Mammary epithelial cell (primary cell): ENCODE measurements at regions of chr3 and their contacts with region 1.

Region 1: DNA sequence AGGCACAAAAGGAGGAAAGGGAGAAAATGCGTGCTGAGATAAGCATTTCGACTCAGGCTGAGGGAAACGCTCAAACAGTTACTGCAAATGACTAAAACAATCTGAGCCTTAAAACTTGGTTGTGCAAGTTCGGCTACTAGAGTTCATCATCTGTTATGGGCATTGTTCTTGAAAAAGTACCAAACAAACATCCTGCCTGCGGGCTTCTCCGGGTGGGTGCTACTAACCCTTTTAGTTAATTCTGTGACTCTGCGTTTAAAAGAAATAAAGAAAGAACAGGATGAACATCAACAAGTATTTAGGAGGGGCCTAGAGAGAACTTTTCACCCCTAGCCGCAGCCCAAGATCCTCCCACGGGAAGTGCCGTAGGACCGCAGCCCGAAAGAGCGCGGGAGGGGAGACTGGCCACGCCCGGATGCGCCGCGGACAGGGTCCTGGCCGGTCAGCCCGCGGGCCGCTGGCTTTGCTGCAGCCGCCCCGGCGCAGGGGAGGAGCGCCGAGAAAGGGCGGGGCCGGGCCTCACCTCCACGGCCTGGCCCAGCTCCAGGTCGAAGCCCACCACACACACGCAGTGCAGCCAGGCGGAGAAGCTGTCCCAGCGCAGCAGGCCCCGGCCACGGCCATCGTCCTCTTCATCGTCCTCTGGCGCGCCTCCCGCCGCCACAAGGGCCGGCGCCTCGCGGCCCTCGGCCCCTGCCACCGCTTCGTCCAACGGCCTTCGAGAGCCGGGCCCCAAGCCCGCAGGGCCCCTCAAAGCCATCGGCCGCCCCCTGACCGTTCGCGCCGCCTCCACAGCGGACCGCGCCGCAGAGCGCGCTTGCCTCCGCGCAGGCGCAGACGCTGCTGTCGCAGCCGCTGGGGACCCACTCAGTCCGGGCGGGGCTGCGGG is at the start of gene DENND6A:
- DNase-seq: peak; percentile 92
- H3K4me3 ChIP-seq: peak within 1 kb of the TSS; percentile 64 to 88 (median 75)
- H3K27ac ChIP-seq: peak within 1 kb of the TSS; percentile 82
- H3K4me1 ChIP-seq: peaks cover 52% of the 10 kb centered on the region
- H3K27me3 ChIP-seq: no peaks in the 10 kb centered on the region
- CTCF ChIP-seq: no peak
- total RNA-seq, gene DENND6A: 26.3 to 29.2 TPM

Region 2: GRCh38 chr3:57597122-57597923 is 95.2 kb before region 1 on chr3 and contains the start of gene ARF4:
- CTCF ChIA-PET with region 1: no interaction called
- dilution Hi-C with region 1: no loop called
- in situ Hi-C with region 1: no loop called
- intact Hi-C with region 1: loop called (anchors 2 kb)
- DNase-seq: peak; percentile 100
- H3K4me3 ChIP-seq: peak within 1 kb of the TSS; percentile 85 to 98 (median 97)
- H3K27ac ChIP-seq: peak within 1 kb of the TSS; percentile 99
- H3K4me1 ChIP-seq: peaks cover 29% of the 10 kb centered on the region
- H3K27me3 ChIP-seq: no peaks in the 10 kb centered on the region
- CTCF ChIP-seq: peak in 1 of 2 donors; percentile 24
- total RNA-seq, gene ARF4: 202 to 208 TPM

Region 3: GRCh38 chr3:57706462-57706861 is 14.0 kb after region 1 on chr3:
- CTCF ChIA-PET with region 1: interaction called, 3 read pairs
- dilution Hi-C with region 1: no loop called
- in situ Hi-C with region 1: no loop called
- intact Hi-C with region 1: loop called (anchors 2 kb)
- DNase-seq: peak; percentile 94
- H3K4me3 ChIP-seq: no peak overlapping the region
- H3K27ac ChIP-seq: peak overlapping the region; percentile 19
- H3K4me1 ChIP-seq: peaks cover 18% of the 10 kb centered on the region
- H3K27me3 ChIP-seq: no peaks in the 10 kb centered on the region
- CTCF ChIP-seq: no peak

Region 4: GRCh38 chr3:57729334-57730045 is 37.0 kb after region 1 on chr3:
- CTCF ChIA-PET with region 1: no interaction called
- dilution Hi-C with region 1: loop called (anchors 5 kb)
- in situ Hi-C with region 1: no loop called
- intact Hi-C with region 1: no loop called
- DNase-seq: peak; percentile 62
- H3K4me3 ChIP-seq: no peak overlapping the region
- H3K27ac ChIP-seq: no peak overlapping the region
- H3K4me1 ChIP-seq: no peaks in the 10 kb centered on the region
- H3K27me3 ChIP-seq: no peaks in the 10 kb centered on the region
- CTCF ChIP-seq: no peak

Region 5: DNA sequence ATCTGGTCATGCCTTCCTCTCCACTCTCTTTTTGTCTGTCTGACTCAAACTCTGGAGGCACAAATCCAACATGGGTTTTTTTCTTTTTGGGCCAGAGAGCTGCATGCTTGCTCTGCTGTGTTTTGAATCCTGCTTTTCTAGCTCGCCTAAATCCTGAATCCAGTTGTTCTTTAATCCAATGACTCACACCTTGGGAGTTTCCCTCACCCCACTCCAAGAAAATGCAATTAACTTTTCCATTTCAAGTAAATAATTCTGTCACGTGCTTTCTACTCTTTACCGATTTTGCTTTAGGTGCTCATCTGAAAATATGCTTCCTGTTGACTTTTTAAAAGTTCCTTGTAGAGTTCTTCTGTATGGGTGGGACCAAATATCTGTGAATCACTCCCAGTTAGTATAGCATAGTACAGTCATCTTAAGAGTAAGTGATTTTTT is 111.2 kb after region 1 on chr3:
- CTCF ChIA-PET with region 1: no interaction called
- dilution Hi-C with region 1: no loop called
- in situ Hi-C with region 1: no loop called
- intact Hi-C with region 1: loop called (anchors 2 kb)
- DNase-seq: peak; percentile 97
- H3K4me3 ChIP-seq: peak overlapping the region in 2 of 3 experiments; percentile 3 to 12
- H3K27ac ChIP-seq: peak overlapping the region; percentile 94
- H3K4me1 ChIP-seq: peaks cover 40% of the 10 kb centered on the region
- H3K27me3 ChIP-seq: no peaks in the 10 kb centered on the region
- CTCF ChIP-seq: no peak

Region 6: GRCh38 chr3:57826245-57826951 is 133.9 kb after region 1 on chr3:
- CTCF ChIA-PET with region 1: no interaction called
- dilution Hi-C with region 1: no loop called
- in situ Hi-C with region 1: no loop called
- intact Hi-C with region 1: loop called (anchors 2 kb)
- DNase-seq: no peak
- H3K4me3 ChIP-seq: no peak overlapping the region
- H3K27ac ChIP-seq: no peak overlapping the region
- H3K4me1 ChIP-seq: peaks cover 9% of the 10 kb centered on the region
- H3K27me3 ChIP-seq: no peaks in the 10 kb centered on the region
- CTCF ChIP-seq: peak in 1 of 2 donors; percentile 28

Region 7: GRCh38 chr3:57852896-57853295 is 160.4 kb after region 1 on chr3:
- CTCF ChIA-PET with region 1: no interaction called
- dilution Hi-C with region 1: no loop called
- in situ Hi-C with region 1: no loop called
- intact Hi-C with region 1: loop called (anchors 5 kb)
- DNase-seq: peak; percentile 12
- H3K4me3 ChIP-seq: no peak overlapping the region
- H3K27ac ChIP-seq: peak overlapping the region; percentile 62
- H3K4me1 ChIP-seq: peaks cover 6% of the 10 kb centered on the region
- H3K27me3 ChIP-seq: no peaks in the 10 kb centered on the region
- CTCF ChIP-seq: peak; percentile 13 to 39